Breast epithelium (tissue), 4 donors: ENCODE measurements at regions of chr20 and their contacts with region 1.

Region 1: GRCh38 chr20:50826121-50826520 is 31.3 kb downstream of the BCAS4 start:
- DNase-seq: no peak
- H3K4me3 ChIP-seq: no peak overlapping the region
- H3K27ac ChIP-seq: no peak overlapping the region
- H3K4me1 ChIP-seq: peaks cover 0 to 6% of the 10 kb centered on the region in 2 donors
- H3K27me3 ChIP-seq: no peaks in the 10 kb centered on the region
- CTCF ChIP-seq: no peak
- POLR2A ChIP-seq: no peak

Region 2: GRCh38 chr20:50799890-50800655 is 26.0 kb before region 1 on chr20:
- intact Hi-C with region 1: no loop called
- DNase-seq: no peak
- H3K4me3 ChIP-seq: no peak overlapping the region
- H3K27ac ChIP-seq: peak overlapping the region; percentile 45 to 66
- H3K4me1 ChIP-seq: no peaks in the 10 kb centered on the region
- H3K27me3 ChIP-seq: no peaks in the 10 kb centered on the region
- CTCF ChIP-seq: no peak
- POLR2A ChIP-seq: no peak

Region 3: DNA sequence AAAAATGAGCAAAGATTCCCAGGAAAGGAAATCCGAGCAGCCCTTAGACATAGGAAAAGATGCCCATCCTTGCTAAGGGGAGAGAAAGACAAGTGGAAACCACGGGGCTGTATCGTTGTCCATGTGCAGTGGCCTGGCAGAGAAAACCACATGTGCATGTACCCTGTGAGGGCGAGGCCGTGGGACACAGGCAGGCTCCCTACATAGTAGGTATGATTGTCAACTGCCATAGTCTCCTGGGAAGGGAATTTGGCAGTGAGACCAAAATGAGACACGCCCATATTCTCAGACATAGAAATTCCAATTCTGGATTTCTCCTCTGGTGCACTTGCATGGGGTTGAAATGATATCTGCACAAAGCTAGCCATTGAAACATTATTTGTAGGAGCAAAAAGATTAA is 1145.9 kb after region 1 on chr20:
- intact Hi-C with region 1: loop called (anchors 5 kb)
- DNase-seq: no peak
- H3K4me3 ChIP-seq: no peak overlapping the region
- H3K27ac ChIP-seq: no peak overlapping the region
- H3K4me1 ChIP-seq: no peaks in the 10 kb centered on the region
- H3K27me3 ChIP-seq: no peaks in the 10 kb centered on the region
- CTCF ChIP-seq: no peak
- POLR2A ChIP-seq: no peak